Dendritic cell treated with granulocyte-macrophage colony-stimulating factor and Interleukin-4, amounts not matched to agents 40 ng/mL and 50 ng/mL, for 4 days (primary cell): ENCODE measurements at regions of chr18 and their contacts with region 1.

Region 1: DNA sequence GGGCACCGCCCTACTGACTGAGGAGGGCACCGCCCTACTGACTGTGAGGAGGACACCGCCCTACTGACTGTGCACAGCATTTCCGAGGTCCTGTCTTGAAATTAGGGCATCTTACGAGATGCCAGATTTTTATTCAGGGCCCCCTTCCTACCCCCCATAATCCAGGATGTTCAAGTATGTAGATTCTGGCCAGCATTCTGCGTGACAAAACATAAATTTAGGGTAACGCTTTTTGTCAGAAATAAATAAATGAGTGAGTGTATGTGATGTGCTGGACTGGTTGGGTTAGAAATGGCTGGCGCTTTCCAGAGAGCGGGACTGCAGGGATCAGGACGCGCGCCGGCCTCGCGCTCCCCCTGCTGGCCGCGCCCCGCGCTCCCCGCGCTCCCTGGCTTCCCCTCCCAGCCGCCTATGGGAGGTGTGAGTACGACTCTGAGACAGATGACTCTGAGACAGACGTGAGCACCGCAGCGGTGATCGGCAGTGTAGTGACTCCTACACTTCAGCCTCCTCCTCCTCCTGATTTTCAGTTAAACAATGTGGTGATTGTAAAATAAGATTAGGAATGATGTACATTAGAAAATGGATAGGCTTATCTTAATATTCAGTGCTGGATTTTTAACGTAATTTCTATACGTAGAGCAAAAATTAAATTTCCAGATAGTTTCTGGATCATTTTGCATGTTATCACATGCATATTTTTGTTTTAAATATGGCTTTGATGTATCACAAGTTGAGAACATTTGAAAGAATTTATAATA is 149.2 kb upstream of the NFATC1 start:
- H3K4me3 Mint-ChIP-seq: no peak overlapping the region
- H3K27ac Mint-ChIP-seq: no peak overlapping the region
- H3K4me1 Mint-ChIP-seq: peaks cover 5% of the 10 kb centered on the region
- H3K27me3 Mint-ChIP-seq: no peaks in the 10 kb centered on the region

Region 2: GRCh38 chr18:78875268-78875997 is 371.1 kb before region 1 on chr18:
- intact Hi-C with region 1: loop called (anchors 1 kb)
- H3K4me3 Mint-ChIP-seq: no peak overlapping the region
- H3K27ac Mint-ChIP-seq: no peak overlapping the region
- H3K4me1 Mint-ChIP-seq: peaks cover 28% of the 10 kb centered on the region
- H3K27me3 Mint-ChIP-seq: peaks cover 5% of the 10 kb centered on the region

Region 3: DNA sequence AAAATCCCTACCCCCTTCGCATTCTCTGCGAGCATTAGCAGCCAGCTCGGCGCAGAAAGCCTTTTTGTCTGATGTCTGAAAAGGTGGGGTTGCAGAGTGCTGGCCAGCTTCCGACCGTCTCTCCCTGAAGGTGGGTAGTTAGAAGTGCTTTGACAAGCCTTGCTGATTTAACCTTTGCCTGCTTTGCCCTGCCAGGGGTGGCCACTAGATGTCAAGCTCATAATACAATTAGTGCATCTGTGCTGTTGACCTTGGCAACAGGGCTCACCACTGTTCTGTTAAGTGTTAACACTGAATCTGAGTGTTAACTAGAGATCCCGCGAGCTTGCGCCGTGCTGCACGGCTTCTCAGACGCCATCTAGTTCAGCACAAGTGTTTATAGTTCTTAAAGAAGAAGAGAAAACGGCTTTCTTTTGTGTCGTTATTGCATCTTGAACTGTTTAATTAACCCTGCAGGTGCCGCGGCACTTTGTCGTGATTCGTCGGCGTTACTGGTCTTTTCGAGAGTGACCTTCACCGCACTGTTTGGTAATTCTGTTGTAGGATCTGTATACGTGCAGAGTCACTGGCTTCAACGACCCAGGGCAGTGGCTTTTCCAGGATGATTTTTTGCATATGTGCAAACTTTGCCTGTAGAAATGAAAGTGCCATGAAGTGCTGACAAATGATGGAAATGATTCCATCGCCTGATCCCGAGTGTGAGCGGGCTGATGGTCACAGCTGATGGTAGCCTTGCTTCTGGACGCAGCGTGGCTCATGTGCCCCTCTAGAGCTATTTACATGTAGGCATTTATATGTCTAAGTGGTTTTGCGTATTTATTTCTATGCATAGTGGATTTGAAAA is 261.4 kb before region 1 on chr18:
- intact Hi-C with region 1: loop called (anchors 2 kb)
- H3K4me3 Mint-ChIP-seq: no peak overlapping the region
- H3K27ac Mint-ChIP-seq: no peak overlapping the region
- H3K4me1 Mint-ChIP-seq: no peaks in the 10 kb centered on the region
- H3K27me3 Mint-ChIP-seq: peaks cover 61% of the 10 kb centered on the region

Region 4: DNA sequence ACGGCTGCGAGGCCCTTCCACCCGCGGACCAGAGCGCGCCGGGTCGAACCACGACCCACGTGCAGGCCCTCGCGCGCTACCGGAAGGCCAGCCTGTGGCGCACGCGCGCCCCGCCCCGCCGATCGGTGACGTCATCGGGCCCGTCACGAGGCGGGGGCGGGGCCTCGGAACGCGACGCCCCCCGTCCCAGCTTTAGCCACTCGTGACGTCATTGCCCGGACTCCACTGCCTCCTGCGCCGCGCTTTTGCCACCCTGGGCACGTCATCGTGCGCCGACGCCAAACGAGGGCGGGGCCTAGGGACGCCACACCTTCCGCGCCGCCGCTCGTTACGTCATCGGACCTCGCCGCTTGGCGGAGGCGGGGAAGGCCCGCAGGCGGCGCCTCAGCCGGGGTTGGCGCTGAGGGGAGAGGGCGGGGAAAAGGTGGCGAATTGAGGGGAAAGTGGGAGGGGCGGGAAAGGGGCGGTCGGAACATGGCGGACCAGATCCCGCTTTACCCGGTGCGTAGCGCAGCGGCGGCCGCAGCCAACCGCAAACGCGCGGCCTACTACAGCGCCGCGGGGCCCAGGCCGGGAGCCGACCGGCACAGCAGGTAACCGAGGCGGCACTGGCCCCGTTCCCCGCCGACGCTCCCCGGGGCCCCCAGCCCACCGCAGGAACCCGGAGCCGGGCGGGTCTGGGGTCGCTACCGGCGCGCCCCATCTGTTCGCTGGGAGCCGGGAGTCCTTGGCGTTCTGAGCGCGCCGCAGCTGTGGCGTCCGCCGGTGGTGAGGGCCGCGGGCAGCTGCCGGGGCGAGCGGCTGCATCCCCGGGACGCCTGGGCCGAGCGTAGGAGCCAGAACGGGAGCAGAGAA is 177.4 kb before region 1 on chr18 and contains the start of gene ATP9B:
- intact Hi-C with region 1: loop called (anchors 10 kb)
- H3K4me3 Mint-ChIP-seq: peak within 1 kb of the TSS; percentile 67
- H3K27ac Mint-ChIP-seq: peak within 1 kb of the TSS; percentile 82
- H3K4me1 Mint-ChIP-seq: peaks cover 22% of the 10 kb centered on the region
- H3K27me3 Mint-ChIP-seq: peaks cover 23% of the 10 kb centered on the region